ENCODE measurements at regions of chr18 and their contacts with region 1.

Region 1: GRCh38 chr18:61917818-61918217 is 25.0 kb upstream of the RNF152 start:
- DNase-seq: no peak
- H3K4me3 ChIP-seq: no peak overlapping the region
- H3K27ac ChIP-seq: no peak overlapping the region
- H3K4me1 ChIP-seq: no peaks in the 10 kb centered on the region
- H3K27me3 ChIP-seq: no peaks in the 10 kb centered on the region
- CTCF ChIP-seq: no peak

Region 2: DNA sequence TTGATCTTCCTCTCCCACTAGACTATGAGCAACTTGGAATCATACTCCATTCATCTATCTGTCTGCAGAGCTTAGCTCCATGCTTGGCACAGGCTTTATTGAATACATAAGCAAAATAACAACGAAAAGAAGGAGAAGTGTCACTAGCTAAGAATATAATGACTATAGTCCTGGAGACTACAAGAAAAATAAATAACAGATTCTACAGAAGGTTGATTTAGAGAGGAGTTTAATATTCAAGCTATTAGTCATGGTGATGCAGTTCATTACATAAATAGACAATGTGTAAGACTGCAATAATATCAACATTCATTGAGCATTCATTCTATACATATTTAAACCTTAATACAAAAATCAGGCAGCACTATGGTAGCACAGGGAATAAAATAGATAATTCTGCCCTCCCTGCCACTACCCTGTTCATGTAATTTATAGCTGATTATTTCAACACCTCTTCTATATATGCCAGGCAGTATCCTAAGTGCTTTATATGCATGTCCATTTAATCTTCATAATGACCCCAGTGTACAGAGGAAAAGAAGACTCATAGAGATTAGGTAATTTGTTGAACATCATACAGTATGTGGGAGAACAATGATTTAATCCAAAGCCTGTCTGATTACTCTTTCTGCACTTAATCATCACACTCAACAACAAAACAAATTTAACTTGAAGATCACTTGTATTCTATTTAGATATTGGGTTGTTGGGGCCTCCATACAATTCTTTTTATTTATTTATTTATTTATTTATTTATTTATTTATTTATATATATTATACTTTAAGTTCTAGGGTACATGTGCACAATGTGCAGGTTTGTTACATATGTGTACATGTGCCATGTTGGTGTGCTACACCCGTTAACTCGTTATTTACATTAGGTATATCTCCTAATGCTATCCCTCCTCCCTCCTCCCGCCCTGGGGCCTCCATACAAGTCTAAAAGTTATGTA is 190.3 kb before region 1 on chr18:
- intact Hi-C with region 1: no loop called
- DNase-seq: no peak
- H3K4me3 ChIP-seq: no peak overlapping the region
- H3K27ac ChIP-seq: no peak overlapping the region
- H3K4me1 ChIP-seq: peaks cover 8% of the 10 kb centered on the region
- H3K27me3 ChIP-seq: no peaks in the 10 kb centered on the region
- CTCF ChIP-seq: no peak

Region 3: GRCh38 chr18:62118328-62118727 is 200.5 kb after region 1 on chr18:
- intact Hi-C with region 1: loop called (anchors 10 kb)
- DNase-seq: no peak
- H3K4me3 ChIP-seq: no peak overlapping the region
- H3K27ac ChIP-seq: no peak overlapping the region
- H3K4me1 ChIP-seq: peaks cover 7% of the 10 kb centered on the region
- H3K27me3 ChIP-seq: no peaks in the 10 kb centered on the region
- CTCF ChIP-seq: no peak

Region 4: DNA sequence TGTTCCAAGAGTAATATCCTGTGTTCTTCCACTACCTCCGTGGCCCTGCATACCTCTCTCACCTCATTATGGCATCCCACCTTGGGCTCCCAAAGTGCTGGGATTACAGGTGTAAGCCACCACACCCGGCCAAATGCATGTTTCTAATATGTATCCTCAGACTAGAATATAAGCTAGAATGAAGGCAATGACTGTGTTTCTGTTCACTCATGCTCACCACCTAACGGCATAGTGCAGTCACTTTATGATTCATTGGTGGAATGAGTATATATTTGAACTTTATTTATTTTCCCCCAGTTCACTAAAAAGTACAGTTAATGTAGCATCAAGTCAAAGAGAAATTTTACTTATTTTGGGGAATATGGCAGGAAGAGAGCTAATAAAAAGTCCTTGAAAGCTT is 257.7 kb after region 1 on chr18:
- intact Hi-C with region 1: no loop called
- DNase-seq: no peak
- H3K4me3 ChIP-seq: no peak overlapping the region
- H3K27ac ChIP-seq: no peak overlapping the region
- H3K4me1 ChIP-seq: peaks cover 5% of the 10 kb centered on the region
- H3K27me3 ChIP-seq: no peaks in the 10 kb centered on the region
- CTCF ChIP-seq: no peak

Measured in left ventricle myocardium inferior (tissue), 1 donor.